Activated naive CD4-positive, alpha-beta T cell treated with anti-CD3 and anti-CD28 coated beads for 36 hours (primary cell): ENCODE measurements at regions of chr1 and their contacts with region 1.

Region 1: DNA sequence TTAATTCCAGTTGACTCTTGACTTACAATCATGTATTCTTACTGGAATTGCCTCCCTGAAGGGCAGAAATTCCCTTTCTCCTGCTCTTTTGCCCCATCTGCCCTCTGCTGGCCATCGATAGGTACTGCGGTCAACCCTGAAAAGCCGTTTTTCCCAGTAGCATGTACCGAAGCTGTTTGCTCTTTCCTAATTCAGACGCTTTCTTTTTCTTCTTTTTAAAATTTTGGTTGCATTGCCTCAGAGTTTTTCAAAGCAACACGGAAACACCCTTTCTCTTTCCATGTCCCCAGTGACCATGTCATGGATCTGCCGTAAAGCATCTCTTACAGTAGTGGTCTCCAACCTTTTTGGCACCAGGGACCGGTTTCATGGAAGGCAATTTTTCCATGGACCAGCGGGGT is 164.2 kb upstream of the C1orf21 start:
- DNase-seq: peak; percentile 59
- H3K4me3 Mint-ChIP-seq: no peak overlapping the region
- H3K27ac Mint-ChIP-seq: no peak overlapping the region
- H3K4me1 Mint-ChIP-seq: no peaks in the 10 kb centered on the region
- H3K27me3 Mint-ChIP-seq: peaks cover 2% of the 10 kb centered on the region

Region 2: GRCh38 chr1:183956559-183957188 is 266.0 kb before region 1 on chr1:
- CTCF ChIA-PET with region 1: no interaction called
- intact Hi-C with region 1: loop called (anchors 1 kb)
- DNase-seq: peak; percentile 71
- H3K4me3 Mint-ChIP-seq: no peak overlapping the region
- H3K27ac Mint-ChIP-seq: peak overlapping the region; percentile 86
- H3K4me1 Mint-ChIP-seq: no peaks in the 10 kb centered on the region
- H3K27me3 Mint-ChIP-seq: no peaks in the 10 kb centered on the region

Region 3: GRCh38 chr1:184110272-184111204 is 112.1 kb before region 1 on chr1:
- CTCF ChIA-PET with region 1: no interaction called
- intact Hi-C with region 1: loop called (anchors 1 kb)
- DNase-seq: no peak
- H3K4me3 Mint-ChIP-seq: no peak overlapping the region
- H3K27ac Mint-ChIP-seq: no peak overlapping the region
- H3K4me1 Mint-ChIP-seq: no peaks in the 10 kb centered on the region
- H3K27me3 Mint-ChIP-seq: no peaks in the 10 kb centered on the region